ENCODE measurements at regions of chr1 and their contacts with region 1.

Region 1: DNA sequence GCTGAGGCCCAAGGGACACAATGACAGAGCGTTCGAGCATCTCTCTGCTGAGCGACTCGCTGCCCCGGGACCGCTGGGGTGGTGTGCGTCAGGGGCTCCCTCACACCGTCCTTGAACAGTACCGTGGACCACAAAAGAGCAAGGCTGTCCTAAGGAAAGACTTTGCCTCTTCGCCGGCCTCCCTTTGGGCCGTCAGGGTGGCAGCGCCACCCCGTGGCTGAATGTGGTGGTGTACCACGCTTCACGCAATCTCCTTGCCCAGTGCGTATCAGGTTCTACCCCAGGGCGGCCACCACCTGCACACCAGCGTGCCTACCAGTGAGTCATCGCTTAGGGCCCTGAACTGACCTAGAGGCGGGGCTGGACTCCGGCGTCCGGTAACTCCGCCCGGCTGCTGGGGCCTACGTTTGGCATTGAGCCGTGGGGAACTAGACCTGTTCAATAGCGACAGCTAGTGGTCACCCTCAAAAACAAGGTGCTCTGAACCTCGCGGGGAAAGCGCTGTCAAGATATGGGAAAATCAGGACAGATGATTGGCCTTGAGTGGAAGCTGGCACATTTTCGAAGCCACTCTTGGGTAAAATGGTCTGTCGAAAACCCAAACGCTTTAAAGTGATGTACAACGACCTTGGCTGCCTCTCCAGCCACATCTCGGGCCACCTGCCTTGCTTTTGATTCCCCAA is 8.1 kb upstream of the TRAF3IP3 start:
- DNase-seq: peak; percentile 92
- H3K4me3 Mint-ChIP-seq: peak overlapping the region; percentile 66
- H3K27ac Mint-ChIP-seq: peak overlapping the region; percentile 91
- H3K4me1 Mint-ChIP-seq: peaks cover 71% of the 10 kb centered on the region
- H3K27me3 Mint-ChIP-seq: no peaks in the 10 kb centered on the region

Region 2: GRCh38 chr1:209601809-209602657 is 145.7 kb before region 1 on chr1:
- CTCF ChIA-PET with region 1: interaction called, 22 read pairs
- intact Hi-C with region 1: loop called (anchors 1 kb)
- DNase-seq: peak; percentile 73
- H3K4me3 Mint-ChIP-seq: no peak overlapping the region
- H3K27ac Mint-ChIP-seq: no peak overlapping the region
- H3K4me1 Mint-ChIP-seq: peaks cover 11% of the 10 kb centered on the region
- H3K27me3 Mint-ChIP-seq: peaks cover 10% of the 10 kb centered on the region

Region 3: DNA sequence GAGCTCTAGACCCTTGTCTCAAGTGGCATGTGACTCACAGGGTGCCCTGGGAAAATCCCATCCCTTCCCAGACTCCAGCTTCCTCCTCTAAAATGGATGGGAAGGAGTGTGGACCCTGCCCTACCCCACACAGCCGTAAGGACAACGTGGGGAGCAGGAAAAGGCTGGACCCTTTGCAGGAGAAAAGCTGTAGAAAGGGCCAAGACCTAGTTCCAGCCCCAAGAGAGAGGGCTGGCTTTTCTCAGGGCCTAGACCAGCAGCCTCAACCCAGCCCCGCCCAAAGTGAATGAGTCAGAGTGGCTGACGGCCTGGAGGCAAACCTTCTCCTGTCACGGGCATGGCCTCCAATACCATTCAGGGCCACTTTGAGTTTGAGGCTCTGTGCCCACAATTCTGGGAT is 96.6 kb before region 1 on chr1:
- CTCF ChIA-PET with region 1: interaction called, 8 read pairs
- intact Hi-C with region 1: loop called (anchors 1 kb)
- DNase-seq: peak; percentile 89
- H3K4me3 Mint-ChIP-seq: peak overlapping the region; percentile 36
- H3K27ac Mint-ChIP-seq: peak overlapping the region; percentile 25
- H3K4me1 Mint-ChIP-seq: peaks cover 50% of the 10 kb centered on the region
- H3K27me3 Mint-ChIP-seq: no peaks in the 10 kb centered on the region

Region 4: DNA sequence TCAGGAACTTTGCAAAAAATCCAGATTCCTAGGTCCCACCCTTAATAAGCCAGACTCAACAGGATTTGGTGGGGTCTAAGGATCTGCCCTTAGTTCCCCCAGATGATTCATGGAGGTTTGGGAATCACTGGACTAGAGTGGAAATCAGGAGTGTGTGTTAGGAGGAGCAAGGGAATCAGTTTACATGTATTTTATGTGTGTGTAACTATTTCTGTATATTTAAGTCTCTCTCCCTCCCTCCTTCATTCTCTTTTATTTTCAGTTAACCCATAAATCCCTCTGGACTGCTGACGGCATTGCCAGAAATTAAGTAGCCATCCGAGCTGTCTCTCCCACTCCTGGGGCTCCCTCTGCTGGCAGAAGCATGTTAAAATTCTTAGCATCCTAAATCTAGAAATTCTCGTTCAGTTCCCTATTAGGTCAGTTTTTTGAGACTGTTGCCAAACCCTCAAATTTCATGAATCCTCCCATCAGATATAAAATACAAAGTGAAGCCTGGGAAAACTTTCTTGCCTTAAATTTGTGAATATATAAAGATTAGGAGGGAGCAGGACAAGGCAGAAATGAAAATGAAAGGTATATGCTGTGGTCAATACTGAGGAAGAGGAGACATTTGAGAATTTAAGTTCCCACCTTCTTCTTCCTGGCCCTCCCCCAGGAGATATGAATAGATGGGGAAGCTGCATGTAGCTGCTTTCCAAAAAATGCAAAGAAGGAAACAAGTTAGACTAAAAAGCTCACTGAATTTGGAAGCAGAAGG is 54.8 kb before region 1 on chr1:
- CTCF ChIA-PET with region 1: interaction called, 17 read pairs
- intact Hi-C with region 1: loop called (anchors 1 kb)
- DNase-seq: peak; percentile 91
- H3K4me3 Mint-ChIP-seq: no peak overlapping the region
- H3K27ac Mint-ChIP-seq: peak overlapping the region; percentile 59
- H3K4me1 Mint-ChIP-seq: peaks cover 68% of the 10 kb centered on the region
- H3K27me3 Mint-ChIP-seq: no peaks in the 10 kb centered on the region

Region 5: GRCh38 chr1:209761011-209761635 is 13.4 kb after region 1 on chr1:
- CTCF ChIA-PET with region 1: interaction called, 77 read pairs
- intact Hi-C with region 1: no loop called
- DNase-seq: no peak
- H3K4me3 Mint-ChIP-seq: peak overlapping the region; percentile 17
- H3K27ac Mint-ChIP-seq: peak overlapping the region; percentile 71
- H3K4me1 Mint-ChIP-seq: peaks cover 67% of the 10 kb centered on the region
- H3K27me3 Mint-ChIP-seq: no peaks in the 10 kb centered on the region

Region 6: GRCh38 chr1:209827384-209828262 is 79.9 kb after region 1 on chr1 and contains the start of gene UTP25:
- CTCF ChIA-PET with region 1: interaction called, 12 read pairs
- intact Hi-C with region 1: loop called (anchors 1 kb)
- DNase-seq: peak; percentile 97
- H3K4me3 Mint-ChIP-seq: peak within 1 kb of the TSS; percentile 79
- H3K27ac Mint-ChIP-seq: peak within 1 kb of the TSS; percentile 86
- H3K4me1 Mint-ChIP-seq: peaks cover 34% of the 10 kb centered on the region
- H3K27me3 Mint-ChIP-seq: peaks cover 4% of the 10 kb centered on the region
- total RNA-seq, gene UTP25: 4.1 to 4.6 TPM

Region 7: GRCh38 chr1:210099921-210100320 is 352.2 kb after region 1 on chr1:
- CTCF ChIA-PET with region 1: no interaction called
- intact Hi-C with region 1: no loop called
- DNase-seq: no peak
- H3K4me3 Mint-ChIP-seq: no peak overlapping the region
- H3K27ac Mint-ChIP-seq: no peak overlapping the region
- H3K4me1 Mint-ChIP-seq: no peaks in the 10 kb centered on the region
- H3K27me3 Mint-ChIP-seq: no peaks in the 10 kb centered on the region